Naive thymus-derived CD4-positive, alpha-beta T cell (primary cell): ENCODE measurements at regions of chr13 and their contacts with region 1.

Region 1: DNA sequence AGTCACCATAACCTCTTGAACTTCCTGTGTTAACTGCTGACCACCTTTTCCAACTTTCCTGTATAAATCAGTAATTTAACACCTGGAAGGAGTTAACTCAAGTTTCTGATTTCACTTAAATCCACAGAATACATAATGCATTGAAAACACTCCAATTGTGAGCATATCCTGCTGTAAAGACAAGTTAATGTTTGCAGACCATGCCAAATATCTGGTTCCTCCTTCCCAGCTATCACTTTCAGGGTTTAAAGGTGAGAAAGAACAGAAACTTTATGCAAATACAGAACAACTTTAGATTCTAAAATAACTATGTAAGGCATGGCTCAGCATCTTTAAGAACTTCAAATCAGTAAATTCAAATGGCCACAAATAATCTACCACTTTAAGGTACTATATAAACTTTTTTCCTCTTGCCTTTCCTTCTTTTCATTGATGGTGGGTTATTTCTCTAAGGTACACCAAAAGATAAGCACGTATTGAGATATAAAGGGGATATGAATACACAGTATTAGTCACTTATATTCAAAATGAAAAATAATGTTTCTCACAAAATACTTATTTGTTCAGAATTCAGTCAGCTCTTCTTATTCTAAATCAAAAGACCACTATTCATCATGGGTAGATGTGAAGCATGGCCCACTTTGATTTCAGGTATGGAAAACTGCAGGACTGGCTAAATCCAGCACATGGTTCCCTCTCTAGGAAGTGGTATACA is 6.6 kb upstream of the TPTE2 start:
- DNase-seq: no peak
- ATAC-seq: no peak
- H3K4me3 ChIP-seq: no peak overlapping the region
- H3K4me3 Mint-ChIP-seq: no peak overlapping the region
- H3K27ac ChIP-seq: no peak overlapping the region
- H3K27ac Mint-ChIP-seq: no peak overlapping the region
- H3K4me1 ChIP-seq: no peaks in the 10 kb centered on the region
- H3K4me1 Mint-ChIP-seq: no peaks in the 10 kb centered on the region
- H3K27me3 ChIP-seq: no peaks in the 10 kb centered on the region
- H3K27me3 Mint-ChIP-seq: peaks cover 5 to 14% (median 7%) of the 10 kb centered on the region in 5 donors

Region 2: DNA sequence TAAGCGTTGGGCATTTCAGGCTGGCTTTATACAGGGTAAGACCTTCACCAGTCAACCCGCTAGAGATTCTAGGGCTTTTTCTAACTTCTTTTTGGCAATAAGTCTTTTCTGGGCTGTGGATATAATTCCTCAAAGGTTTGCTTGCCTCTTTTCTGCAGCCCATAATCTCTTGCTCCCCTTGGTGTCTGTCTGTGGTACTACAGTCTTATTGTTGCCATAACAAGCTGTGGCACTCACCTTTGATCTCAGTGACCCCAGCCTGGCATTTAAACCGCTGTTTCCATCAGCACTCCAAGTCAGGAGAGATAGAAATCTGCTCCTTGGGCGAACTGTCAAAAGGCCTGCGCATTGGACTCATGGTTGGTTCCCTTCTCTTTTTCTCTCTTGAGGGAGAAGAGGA is 50.9 kb after region 1 on chr13:
- CTCF ChIA-PET with region 1: no interaction called
- POLR2A ChIA-PET with region 1: no interaction called
- intact Hi-C with region 1: loop called in 1 of 2 experiments (anchors 10 kb)
- DNase-seq: peak in 5 of 9 donors; percentile 11 to 29 (median 22)
- ATAC-seq: peak; percentile 53
- H3K4me3 ChIP-seq: no peak overlapping the region
- H3K4me3 Mint-ChIP-seq: no peak overlapping the region
- H3K27ac ChIP-seq: no peak overlapping the region
- H3K27ac Mint-ChIP-seq: peak overlapping the region in 1 of 9 donors; percentile 17
- H3K4me1 ChIP-seq: no peaks in the 10 kb centered on the region
- H3K4me1 Mint-ChIP-seq: no peaks in the 10 kb centered on the region
- H3K27me3 ChIP-seq: no peaks in the 10 kb centered on the region
- H3K27me3 Mint-ChIP-seq: peaks cover 0 to 35% (median 25%) of the 10 kb centered on the region in 5 donors

Region 3: DNA sequence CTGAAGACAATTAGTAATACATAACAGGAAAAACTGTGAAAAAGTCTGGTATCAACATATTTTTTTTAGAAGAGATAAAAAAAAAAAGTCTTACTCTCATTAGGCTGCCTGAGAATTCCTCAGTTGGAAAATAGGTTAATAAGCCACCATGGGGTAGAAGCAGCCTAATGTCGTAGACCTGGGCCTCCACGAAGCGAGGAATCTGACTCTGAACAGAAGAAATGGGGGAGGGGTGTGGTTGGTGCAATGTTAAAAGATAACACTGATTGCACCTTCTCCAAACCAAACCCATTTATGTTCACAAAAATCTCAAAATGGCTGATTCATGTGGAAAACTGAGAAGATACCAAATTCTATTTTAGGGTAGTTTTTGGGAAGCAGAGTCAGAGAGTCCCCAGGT is 127.9 kb after region 1 on chr13:
- CTCF ChIA-PET with region 1: no interaction called
- POLR2A ChIA-PET with region 1: no interaction called
- intact Hi-C with region 1: no loop called
- DNase-seq: no peak
- ATAC-seq: no peak
- H3K4me3 ChIP-seq: no peak overlapping the region
- H3K4me3 Mint-ChIP-seq: no peak overlapping the region
- H3K27ac ChIP-seq: no peak overlapping the region
- H3K27ac Mint-ChIP-seq: no peak overlapping the region
- H3K4me1 ChIP-seq: no peaks in the 10 kb centered on the region
- H3K4me1 Mint-ChIP-seq: peaks cover 15 to 33% (median 25%) of the 10 kb centered on the region in 7 donors
- H3K27me3 ChIP-seq: no peaks in the 10 kb centered on the region
- H3K27me3 Mint-ChIP-seq: no peaks in the 10 kb centered on the region

Region 4: GRCh38 chr13:19781526-19781925 is 213.5 kb after region 1 on chr13:
- CTCF ChIA-PET with region 1: no interaction called
- POLR2A ChIA-PET with region 1: no interaction called
- intact Hi-C with region 1: no loop called
- DNase-seq: no peak
- ATAC-seq: no peak
- H3K4me3 ChIP-seq: peak overlapping the region; percentile 99
- H3K4me3 Mint-ChIP-seq: peak overlapping the region; percentile 96 to 100 (median 98)
- H3K27ac ChIP-seq: peak overlapping the region; percentile 98
- H3K27ac Mint-ChIP-seq: peak overlapping the region in 8 of 9 donors; percentile 55 to 100 (median 99)
- H3K4me1 ChIP-seq: peaks cover 0 to 8% of the 10 kb centered on the region in 2 donors
- H3K4me1 Mint-ChIP-seq: peaks cover 0 to 13% (median 10%) of the 10 kb centered on the region in 7 donors
- H3K27me3 ChIP-seq: no peaks in the 10 kb centered on the region
- H3K27me3 Mint-ChIP-seq: peaks cover 0 to 5% (median 0%) of the 10 kb centered on the region in 5 donors